CD8-positive, alpha-beta T cell (primary cell): ENCODE measurements at regions of chr10 and their contacts with region 1.

Region 1: DNA sequence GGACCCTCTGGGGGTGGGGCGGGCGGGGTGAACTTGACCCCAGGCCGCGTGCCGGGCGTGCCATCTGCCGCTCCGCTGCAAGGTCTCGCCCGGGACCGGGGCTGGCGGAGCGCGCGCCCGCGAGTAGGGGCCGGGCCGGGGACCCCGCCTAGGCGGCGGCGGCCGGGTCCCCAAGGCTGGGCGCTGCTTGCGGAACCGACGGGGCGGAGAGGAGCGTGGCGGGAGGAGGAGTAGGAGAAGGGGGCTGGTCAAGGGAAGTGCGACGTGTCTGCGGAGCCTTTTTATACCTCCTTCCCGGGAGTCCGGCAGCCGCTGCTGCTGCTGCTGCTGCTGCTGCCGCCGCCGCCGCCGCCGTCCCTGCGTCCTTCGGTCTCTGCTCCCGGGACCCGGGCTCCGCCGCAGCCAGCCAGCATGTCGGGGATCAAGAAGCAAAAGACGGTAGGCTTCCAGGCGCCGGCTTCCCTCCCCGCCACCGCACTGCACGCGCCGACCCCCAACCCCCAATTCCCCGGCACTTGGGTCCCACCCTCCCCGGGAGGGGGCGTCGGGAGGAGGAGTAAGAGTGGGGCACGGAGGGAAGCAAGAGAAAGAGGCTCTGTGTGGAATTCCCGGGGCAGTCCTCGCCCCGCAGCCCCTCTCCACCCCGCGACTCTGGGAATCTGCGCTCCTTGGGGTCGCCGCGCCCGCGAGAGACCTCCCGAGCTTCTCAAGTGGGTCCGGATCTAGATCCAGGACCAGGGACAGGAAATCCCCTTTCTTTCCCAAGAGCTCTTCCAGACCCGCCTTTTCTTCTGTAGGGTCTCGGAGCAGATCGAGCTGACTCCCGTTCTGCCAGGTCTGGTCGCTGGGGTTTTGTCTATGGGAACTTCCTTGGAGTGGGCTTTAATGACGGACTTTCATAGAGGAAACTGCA is at the start of gene PAPSS2:
- DNase-seq: peak in 3 of 9 experiments; percentile 8 to 22 (median 20)
- ATAC-seq: peak; percentile 36
- H3K4me3 ChIP-seq: peak within 1 kb of the TSS; percentile 41 to 48
- H3K4me3 Mint-ChIP-seq: peak within 1 kb of the TSS; percentile 79
- H3K27ac ChIP-seq: no peak within 1 kb of the TSS
- H3K27ac Mint-ChIP-seq: no peak within 1 kb of the TSS
- H3K4me1 ChIP-seq: peaks cover 6% of the 10 kb centered on the region
- H3K4me1 Mint-ChIP-seq: peaks cover 11% of the 10 kb centered on the region
- H3K27me3 ChIP-seq: peaks cover 8 to 14% of the 10 kb centered on the region in 2 experiments
- H3K27me3 Mint-ChIP-seq: peaks cover 53% of the 10 kb centered on the region
- CTCF ChIP-seq: no peak
- total RNA-seq, gene PAPSS2: not detected

Region 2: GRCh38 chr10:87605628-87606308 is 54.1 kb before region 1 on chr10:
- CTCF ChIA-PET with region 1: no interaction called
- POLR2A ChIA-PET with region 1: no interaction called
- intact Hi-C with region 1: no loop called
- DNase-seq: no peak
- ATAC-seq: no peak
- H3K4me3 ChIP-seq: no peak overlapping the region
- H3K4me3 Mint-ChIP-seq: no peak overlapping the region
- H3K27ac ChIP-seq: no peak overlapping the region
- H3K27ac Mint-ChIP-seq: no peak overlapping the region
- H3K4me1 ChIP-seq: no peaks in the 10 kb centered on the region
- H3K4me1 Mint-ChIP-seq: peaks cover 7% of the 10 kb centered on the region
- H3K27me3 ChIP-seq: no peaks in the 10 kb centered on the region
- H3K27me3 Mint-ChIP-seq: no peaks in the 10 kb centered on the region
- CTCF ChIP-seq: no peak

Region 3: DNA sequence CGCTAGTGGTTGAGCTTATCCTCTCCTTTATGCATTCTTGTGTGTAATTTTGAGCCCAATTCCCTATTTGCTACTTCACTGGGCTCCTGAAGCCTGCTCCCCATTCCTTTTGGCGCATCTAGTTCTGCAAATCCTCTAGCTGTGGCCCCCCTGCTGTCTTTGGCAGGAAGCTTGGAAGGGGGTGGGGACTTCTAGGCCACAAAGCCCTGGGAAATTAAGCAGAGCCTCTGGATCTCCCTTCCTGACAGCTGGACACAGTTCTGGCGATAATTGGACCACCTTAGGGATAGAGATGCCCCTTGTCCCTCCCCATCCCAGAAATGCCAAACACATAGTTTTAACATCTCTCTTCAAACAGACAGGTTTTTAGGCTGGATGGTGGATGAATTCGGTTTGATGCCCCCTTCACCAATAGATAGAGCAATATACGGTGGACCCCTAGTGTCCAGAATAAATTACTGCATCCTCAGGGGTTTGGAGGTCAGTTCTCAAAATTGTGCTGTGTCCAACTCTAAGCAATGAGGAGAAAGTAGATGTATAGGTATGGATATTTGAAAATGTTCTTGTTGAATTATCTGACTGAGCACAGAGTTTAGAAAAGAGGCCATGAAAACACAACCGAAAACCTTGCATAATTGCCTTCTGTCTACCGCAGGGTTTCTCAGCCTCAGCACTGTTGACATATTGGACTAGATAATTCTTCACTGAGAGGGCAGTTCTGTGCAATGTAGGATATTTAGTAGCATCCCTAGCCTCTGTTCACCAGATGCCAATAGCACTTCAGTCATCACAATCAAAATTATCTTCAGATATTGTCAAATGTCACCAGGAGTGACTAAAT is 75.4 kb after region 1 on chr10:
- CTCF ChIA-PET with region 1: no interaction called
- POLR2A ChIA-PET with region 1: no interaction called
- intact Hi-C with region 1: loop called in 1 of 2 experiments (anchors 2 kb)
- DNase-seq: peak in 2 of 9 experiments; percentile 20 to 30
- ATAC-seq: no peak
- H3K4me3 ChIP-seq: no peak overlapping the region
- H3K4me3 Mint-ChIP-seq: no peak overlapping the region
- H3K27ac ChIP-seq: no peak overlapping the region
- H3K27ac Mint-ChIP-seq: no peak overlapping the region
- H3K4me1 ChIP-seq: no peaks in the 10 kb centered on the region
- H3K4me1 Mint-ChIP-seq: no peaks in the 10 kb centered on the region
- H3K27me3 ChIP-seq: peaks cover 0 to 3% of the 10 kb centered on the region in 2 experiments
- H3K27me3 Mint-ChIP-seq: peaks cover 27% of the 10 kb centered on the region
- CTCF ChIP-seq: peak; percentile 55